ENCODE measurements at regions of chr20 and their contacts with region 1.

Region 1: GRCh38 chr20:19784511-19785172 is 26.6 kb downstream of the RIN2 start:
- DNase-seq: peak; percentile 91
- H3K4me3 ChIP-seq: no peak overlapping the region
- H3K27ac ChIP-seq: peak overlapping the region; percentile 73
- H3K4me1 ChIP-seq: peaks cover 34% of the 10 kb centered on the region
- H3K27me3 ChIP-seq: no peaks in the 10 kb centered on the region
- CTCF ChIP-seq: peak; percentile 63 to 70
- POLR2A ChIP-seq: no peak

Region 2: GRCh38 chr20:18778690-18779392 is 1005.8 kb before region 1 on chr20:
- CTCF ChIA-PET with region 1: no interaction called
- POLR2A ChIA-PET with region 1: no interaction called
- dilution Hi-C with region 1: no loop called
- intact Hi-C with region 1: no loop called
- DNase-seq: no peak
- H3K4me3 ChIP-seq: no peak overlapping the region
- H3K27ac ChIP-seq: no peak overlapping the region
- H3K4me1 ChIP-seq: no peaks in the 10 kb centered on the region
- H3K27me3 ChIP-seq: peaks cover 0 to 2% of the 10 kb centered on the region in 2 experiments
- CTCF ChIP-seq: no peak
- POLR2A ChIP-seq: no peak

Region 3: DNA sequence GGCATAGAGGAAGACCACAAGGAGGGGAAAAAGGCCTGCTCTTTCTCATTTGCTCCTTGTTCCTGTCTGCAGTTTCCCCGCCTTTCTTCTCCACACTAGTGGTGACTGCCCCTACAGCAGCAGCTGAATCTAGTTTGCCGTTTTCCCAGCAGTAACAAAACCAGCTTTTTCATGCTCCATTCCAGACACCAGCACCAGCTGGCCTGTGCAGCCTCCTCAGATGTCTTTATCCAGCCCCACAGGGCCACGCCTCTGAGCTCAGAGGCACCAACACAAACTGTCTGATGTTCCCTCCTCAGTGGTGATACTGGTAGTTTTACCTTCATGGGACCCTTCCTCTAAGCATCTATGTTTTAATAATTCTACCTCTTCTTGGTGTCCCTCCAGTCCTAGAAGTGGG is 642.6 kb before region 1 on chr20:
- CTCF ChIA-PET with region 1: no interaction called
- POLR2A ChIA-PET with region 1: no interaction called
- dilution Hi-C with region 1: no loop called
- intact Hi-C with region 1: no loop called
- DNase-seq: no peak
- H3K4me3 ChIP-seq: no peak overlapping the region
- H3K27ac ChIP-seq: no peak overlapping the region
- H3K4me1 ChIP-seq: no peaks in the 10 kb centered on the region
- H3K27me3 ChIP-seq: no peaks in the 10 kb centered on the region
- CTCF ChIP-seq: no peak
- POLR2A ChIP-seq: no peak

Region 4: GRCh38 chr20:19692685-19693119 is 91.9 kb before region 1 on chr20:
- CTCF ChIA-PET with region 1: interaction called, 16 read pairs
- POLR2A ChIA-PET with region 1: no interaction called
- dilution Hi-C with region 1: no loop called
- intact Hi-C with region 1: loop called (anchors 1 kb)
- DNase-seq: peak; percentile 68
- H3K4me3 ChIP-seq: no peak overlapping the region
- H3K27ac ChIP-seq: no peak overlapping the region
- H3K4me1 ChIP-seq: peaks cover 5% of the 10 kb centered on the region
- H3K27me3 ChIP-seq: no peaks in the 10 kb centered on the region
- CTCF ChIP-seq: peak; percentile 84 to 87
- POLR2A ChIP-seq: no peak

Region 5: GRCh38 chr20:19770375-19770774 is 14.3 kb before region 1 on chr20:
- CTCF ChIA-PET with region 1: interaction called, 13 read pairs
- POLR2A ChIA-PET with region 1: no interaction called
- dilution Hi-C with region 1: no loop called
- intact Hi-C with region 1: no loop called
- DNase-seq: no peak
- H3K4me3 ChIP-seq: no peak overlapping the region
- H3K27ac ChIP-seq: no peak overlapping the region
- H3K4me1 ChIP-seq: peaks cover 6% of the 10 kb centered on the region
- H3K27me3 ChIP-seq: no peaks in the 10 kb centered on the region
- CTCF ChIP-seq: no peak
- POLR2A ChIP-seq: no peak

Region 6: GRCh38 chr20:19815553-19815991 is 30.9 kb after region 1 on chr20:
- CTCF ChIA-PET with region 1: interaction called, 32 read pairs
- POLR2A ChIA-PET with region 1: interaction called, 5 read pairs
- dilution Hi-C with region 1: no loop called
- intact Hi-C with region 1: loop called (anchors 1 kb)
- DNase-seq: peak; percentile 98
- H3K4me3 ChIP-seq: no peak overlapping the region
- H3K27ac ChIP-seq: peak overlapping the region; percentile 96
- H3K4me1 ChIP-seq: peaks cover 59% of the 10 kb centered on the region
- H3K27me3 ChIP-seq: no peaks in the 10 kb centered on the region
- CTCF ChIP-seq: no peak
- POLR2A ChIP-seq: peak; percentile 20

Region 7: GRCh38 chr20:19889011-19889953 is 104.6 kb after region 1 on chr20:
- CTCF ChIA-PET with region 1: interaction called, 98 read pairs
- POLR2A ChIA-PET with region 1: interaction called, 5 read pairs
- dilution Hi-C with region 1: no loop called
- intact Hi-C with region 1: loop called (anchors 1 kb)
- DNase-seq: peak; percentile 97
- H3K4me3 ChIP-seq: peak overlapping the region; percentile 63 to 98 (median 85)
- H3K27ac ChIP-seq: peak overlapping the region; percentile 91
- H3K4me1 ChIP-seq: peaks cover 50% of the 10 kb centered on the region
- H3K27me3 ChIP-seq: no peaks in the 10 kb centered on the region
- CTCF ChIP-seq: no peak
- POLR2A ChIP-seq: peak; percentile 69

Region 8: DNA sequence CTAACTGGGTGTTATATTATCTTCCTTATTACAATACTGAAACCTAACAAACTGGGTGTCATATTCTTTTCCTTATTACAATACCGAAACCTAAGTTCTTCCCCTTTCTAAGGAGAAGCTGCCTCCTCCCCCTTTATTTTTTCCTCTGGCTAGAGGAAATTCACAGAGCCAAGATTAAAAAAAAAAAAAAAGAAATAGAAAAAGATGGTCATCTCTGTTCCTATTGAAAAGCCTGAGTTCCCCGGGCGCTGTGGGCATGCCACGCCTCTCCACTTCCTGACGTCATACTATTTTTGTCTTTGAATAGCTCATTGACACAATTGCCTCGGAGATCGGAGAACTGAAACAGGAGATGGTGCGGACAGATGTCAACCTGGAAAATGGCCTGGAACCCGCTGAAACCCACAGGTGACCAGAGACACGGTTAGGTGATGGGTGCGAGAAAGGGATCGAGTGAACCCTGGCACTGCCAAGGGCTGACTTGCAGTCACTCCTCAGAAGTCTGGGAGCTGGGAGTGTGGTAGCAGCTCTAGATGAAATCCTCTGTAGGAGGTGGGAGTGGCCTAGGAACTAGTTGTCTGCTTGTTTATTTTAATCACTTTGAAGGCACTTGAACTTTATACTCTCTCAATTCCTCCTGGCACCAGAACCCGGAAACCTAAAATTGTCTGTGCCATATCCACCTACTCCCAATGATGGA is 150.3 kb after region 1 on chr20:
- CTCF ChIA-PET with region 1: interaction called, 13 read pairs
- POLR2A ChIA-PET with region 1: no interaction called
- dilution Hi-C with region 1: no loop called
- intact Hi-C with region 1: loop called (anchors 1 kb)
- DNase-seq: peak; percentile 94
- H3K4me3 ChIP-seq: peak overlapping the region in 1 of 3 experiments; percentile 31
- H3K27ac ChIP-seq: peak overlapping the region; percentile 79
- H3K4me1 ChIP-seq: peaks cover 75% of the 10 kb centered on the region
- H3K27me3 ChIP-seq: no peaks in the 10 kb centered on the region
- CTCF ChIP-seq: no peak
- POLR2A ChIP-seq: no peak

Region 9: GRCh38 chr20:19995220-19995863 is 210.7 kb after region 1 on chr20:
- CTCF ChIA-PET with region 1: interaction called, 60 read pairs
- POLR2A ChIA-PET with region 1: interaction called, 4 read pairs
- dilution Hi-C with region 1: no loop called
- intact Hi-C with region 1: loop called (anchors 1 kb)
- DNase-seq: peak; percentile 65
- H3K4me3 ChIP-seq: no peak overlapping the region
- H3K27ac ChIP-seq: no peak overlapping the region
- H3K4me1 ChIP-seq: peaks cover 48% of the 10 kb centered on the region
- H3K27me3 ChIP-seq: no peaks in the 10 kb centered on the region
- CTCF ChIP-seq: peak; percentile 66 to 74
- POLR2A ChIP-seq: no peak